ENCODE measurements at regions of chr2 and their contacts with region 1.

Region 1: GRCh38 chr2:6429208-6429986 is 436.3 kb downstream of the CMPK2 start:
- DNase-seq: no peak
- H3K4me3 ChIP-seq: no peak overlapping the region
- H3K27ac ChIP-seq: no peak overlapping the region
- H3K4me1 ChIP-seq: no peaks in the 10 kb centered on the region
- CTCF ChIP-seq: no peak

Region 2: DNA sequence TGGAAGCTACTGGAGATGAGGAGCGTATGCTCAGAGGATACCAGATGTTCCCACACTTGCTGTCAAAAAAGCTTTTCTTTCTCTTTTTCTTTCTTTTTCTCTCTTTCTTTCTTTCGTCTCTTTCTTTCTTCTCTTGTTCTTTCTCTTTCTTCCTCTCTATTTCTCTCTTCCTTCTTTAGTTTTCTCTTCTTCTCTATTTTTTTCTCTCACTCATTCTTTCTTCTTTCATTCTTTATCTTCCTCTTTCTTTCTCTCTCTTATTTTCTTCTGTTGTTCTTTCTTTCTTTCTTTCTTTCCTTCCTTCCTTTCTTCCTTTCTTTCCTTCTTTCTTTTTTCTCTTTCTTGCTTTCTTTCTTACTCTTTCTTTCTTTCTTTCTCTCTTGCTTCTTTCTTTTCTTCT is 21.3 kb before region 1 on chr2:
- CTCF ChIA-PET with region 1: no interaction called
- POLR2A ChIA-PET with region 1: no interaction called
- intact Hi-C with region 1: no loop called
- DNase-seq: no peak
- H3K4me3 ChIP-seq: no peak overlapping the region
- H3K27ac ChIP-seq: no peak overlapping the region
- H3K4me1 ChIP-seq: no peaks in the 10 kb centered on the region
- CTCF ChIP-seq: no peak

Region 3: DNA sequence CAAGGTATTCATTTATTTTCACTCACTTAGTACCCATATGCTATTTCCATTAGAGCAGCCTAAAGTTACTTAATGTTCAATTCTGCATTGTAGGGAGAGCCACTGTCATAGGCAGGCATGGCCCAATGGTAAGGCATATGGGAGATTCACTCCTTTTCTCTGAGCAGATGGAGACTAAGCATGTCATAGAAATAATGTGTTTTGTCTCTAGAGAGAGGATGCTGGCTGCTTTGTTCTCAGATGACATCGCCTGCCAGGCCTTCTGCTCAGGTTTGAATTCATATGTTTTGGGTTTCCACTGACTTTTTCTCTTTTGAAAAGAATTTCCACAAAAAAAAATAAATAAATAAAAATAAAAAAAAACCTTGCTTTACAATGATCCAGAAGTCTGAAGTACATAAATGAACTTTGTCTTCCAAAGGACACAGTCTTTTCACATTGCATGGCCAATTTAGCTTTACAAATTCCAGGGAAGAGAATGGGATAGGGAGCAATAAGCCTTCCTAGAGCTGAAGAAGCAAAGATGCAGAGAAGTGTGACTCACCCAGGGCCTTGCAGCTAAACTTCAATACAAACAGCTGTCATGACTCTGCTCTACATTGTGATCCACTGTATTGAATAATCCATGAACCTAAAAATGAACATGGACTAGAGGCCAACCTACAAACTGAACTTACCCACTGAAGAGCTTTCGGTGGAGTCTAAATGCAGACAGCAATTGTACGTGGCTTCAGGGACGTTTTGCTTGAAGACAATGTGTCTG is 13.8 kb after region 1 on chr2:
- CTCF ChIA-PET with region 1: no interaction called
- POLR2A ChIA-PET with region 1: interaction called, 15 read pairs
- intact Hi-C with region 1: no loop called
- DNase-seq: no peak
- H3K4me3 ChIP-seq: no peak overlapping the region
- H3K27ac ChIP-seq: no peak overlapping the region
- H3K4me1 ChIP-seq: no peaks in the 10 kb centered on the region
- CTCF ChIP-seq: no peak

Measured in OCI-LY7 (cell line).